HepG2 (cell line): ENCODE measurements at regions of chr7 and their contacts with region 1.

Region 1: DNA sequence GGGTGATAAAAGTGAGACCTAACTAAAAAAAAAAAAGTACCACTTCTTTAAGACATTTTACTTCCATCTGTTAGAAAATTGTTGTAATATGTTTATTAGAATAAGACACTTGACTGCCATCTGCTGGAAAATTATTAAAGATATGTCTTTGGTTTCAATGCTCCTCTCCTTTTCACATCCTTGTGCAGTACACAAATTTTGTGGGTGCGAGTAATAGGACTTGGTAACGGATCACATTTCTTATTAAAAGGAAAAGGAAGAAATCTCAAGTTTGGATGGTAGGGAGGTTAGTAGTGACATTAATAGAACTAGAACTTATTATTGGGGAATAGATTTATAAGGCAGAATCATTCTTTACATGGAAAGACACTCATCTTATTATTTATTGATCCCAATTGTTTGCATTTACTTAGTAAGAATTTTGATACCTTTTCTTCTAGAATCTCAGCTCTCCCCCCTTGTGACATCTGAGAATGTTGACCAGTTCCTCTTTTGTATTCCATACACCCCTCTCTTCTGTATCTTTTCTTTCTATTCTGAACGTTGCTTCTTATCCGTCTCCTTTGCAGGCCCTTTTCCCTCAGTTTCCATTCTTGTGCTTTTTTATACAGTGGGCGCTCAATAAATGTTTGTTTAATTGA is 43.1 kb upstream of the RPA3 start:
- DNase-seq: peak; percentile 48
- ATAC-seq: no peak; the same call in 2 of the 3 replicates
- H3K4me3 ChIP-seq: no peak overlapping the region
- H3K27ac ChIP-seq: no peak overlapping the region
- H3K4me1 ChIP-seq: peaks cover 11% of the 10 kb centered on the region
- H3K27me3 ChIP-seq: no peaks in the 10 kb centered on the region
- CTCF ChIP-seq: peak; percentile 24; the same call in 1 of the 2 replicates
- EP300 ChIP-seq: no peak
- POLR2A ChIP-seq: no peak
- RAD21 ChIP-seq: no peak

Region 2: GRCh38 chr7:7424151-7424873 is 337.1 kb before region 1 on chr7:
- CTCF ChIA-PET with region 1: no interaction called
- POLR2A ChIA-PET with region 1: no interaction called
- in situ Hi-C with region 1: no loop called
- intact Hi-C with region 1: loop called (anchors 10 kb)
- DNase-seq: peak; percentile 58
- ATAC-seq: peak; percentile 95
- H3K4me3 ChIP-seq: peak overlapping the region in 2 of 3 experiments; percentile 5 to 25; a peak in 2 of 6 replicates
- H3K27ac ChIP-seq: no peak overlapping the region
- H3K4me1 ChIP-seq: no peaks in the 10 kb centered on the region
- H3K27me3 ChIP-seq: no peaks in the 10 kb centered on the region
- CTCF ChIP-seq: peak; percentile 89
- EP300 ChIP-seq: no peak
- POLR2A ChIP-seq: no peak
- RAD21 ChIP-seq: peak; percentile 91

Region 3: DNA sequence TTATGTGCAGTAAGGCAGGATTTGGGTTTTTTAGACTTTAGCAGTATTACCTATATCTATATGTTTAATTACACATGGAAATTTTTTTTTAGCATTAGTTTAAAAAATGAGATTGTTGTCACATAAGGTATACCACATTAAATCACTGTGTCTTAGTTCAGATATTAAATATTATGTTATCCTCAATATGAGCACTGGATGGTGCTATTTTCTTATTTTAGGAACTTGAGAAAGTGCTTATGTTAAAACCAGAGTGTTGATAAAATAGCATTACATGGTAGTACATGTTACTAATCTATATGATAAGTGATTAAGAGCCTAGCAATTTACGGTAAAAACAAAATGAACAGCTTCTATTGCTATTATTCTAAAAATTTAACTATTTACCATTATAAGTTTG is 166.0 kb before region 1 on chr7:
- CTCF ChIA-PET with region 1: no interaction called
- POLR2A ChIA-PET with region 1: no interaction called
- in situ Hi-C with region 1: no loop called
- intact Hi-C with region 1: loop called (anchors 5 kb)
- DNase-seq: peak; percentile 3
- ATAC-seq: no peak
- H3K4me3 ChIP-seq: no peak overlapping the region
- H3K27ac ChIP-seq: no peak overlapping the region
- H3K4me1 ChIP-seq: peaks cover 8% of the 10 kb centered on the region
- H3K27me3 ChIP-seq: no peaks in the 10 kb centered on the region
- CTCF ChIP-seq: peak; percentile 26; the same call in 1 of the 2 replicates
- EP300 ChIP-seq: no peak
- POLR2A ChIP-seq: no peak
- RAD21 ChIP-seq: no peak

Region 4: GRCh38 chr7:7640221-7641128 is 121.0 kb before region 1 on chr7 and contains the start of gene UMAD1:
- CTCF ChIA-PET with region 1: no interaction called
- POLR2A ChIA-PET with region 1: no interaction called
- in situ Hi-C with region 1: no loop called
- intact Hi-C with region 1: loop called (anchors 5 kb)
- DNase-seq: peak; percentile 99
- ATAC-seq: peak; percentile 98
- H3K4me3 ChIP-seq: peak within 1 kb of the TSS; percentile 88 to 95 (median 94)
- H3K27ac ChIP-seq: peak within 1 kb of the TSS; percentile 82
- H3K4me1 ChIP-seq: peaks cover 35% of the 10 kb centered on the region
- H3K27me3 ChIP-seq: no peaks in the 10 kb centered on the region; a peak in 1 of 5 replicates
- CTCF ChIP-seq: peak; percentile 24
- EP300 ChIP-seq: 0 out of 4 replicates have a peak, but pooled peaks of 1 of the 2 experiments have one; percentile 7
- POLR2A ChIP-seq: peak; percentile 71 to 76
- RAD21 ChIP-seq: no peak
- total RNA-seq, gene UMAD1: 17.6 and 26.4 TPM in 2 replicates

Region 5: GRCh38 chr7:7681179-7681935 is 80.1 kb before region 1 on chr7:
- CTCF ChIA-PET with region 1: interaction called, 15 read pairs
- POLR2A ChIA-PET with region 1: no interaction called
- in situ Hi-C with region 1: loop called (anchors 5 kb)
- intact Hi-C with region 1: loop called (anchors 1 kb)
- DNase-seq: peak; percentile 50
- ATAC-seq: peak; percentile 66
- H3K4me3 ChIP-seq: no peak overlapping the region
- H3K27ac ChIP-seq: no peak overlapping the region
- H3K4me1 ChIP-seq: no peaks in the 10 kb centered on the region
- H3K27me3 ChIP-seq: no peaks in the 10 kb centered on the region
- CTCF ChIP-seq: peak; percentile 64
- EP300 ChIP-seq: no peak
- POLR2A ChIP-seq: no peak
- RAD21 ChIP-seq: 0 out of 2 replicates have a peak, but pooled peaks have one; percentile 35

Region 6: GRCh38 chr7:8035647-8036518 is 274.4 kb after region 1 on chr7:
- CTCF ChIA-PET with region 1: no interaction called
- POLR2A ChIA-PET with region 1: no interaction called
- in situ Hi-C with region 1: no loop called
- intact Hi-C with region 1: loop called (anchors 10 kb)
- DNase-seq: peak; percentile 44
- ATAC-seq: peak; percentile 99
- H3K4me3 ChIP-seq: no peak overlapping the region
- H3K27ac ChIP-seq: no peak overlapping the region
- H3K4me1 ChIP-seq: no peaks in the 10 kb centered on the region
- H3K27me3 ChIP-seq: no peaks in the 10 kb centered on the region
- CTCF ChIP-seq: peak; percentile 78
- EP300 ChIP-seq: no peak
- POLR2A ChIP-seq: no peak
- RAD21 ChIP-seq: 0 out of 2 replicates have a peak, but pooled peaks have one; percentile 25

Region 7: DNA sequence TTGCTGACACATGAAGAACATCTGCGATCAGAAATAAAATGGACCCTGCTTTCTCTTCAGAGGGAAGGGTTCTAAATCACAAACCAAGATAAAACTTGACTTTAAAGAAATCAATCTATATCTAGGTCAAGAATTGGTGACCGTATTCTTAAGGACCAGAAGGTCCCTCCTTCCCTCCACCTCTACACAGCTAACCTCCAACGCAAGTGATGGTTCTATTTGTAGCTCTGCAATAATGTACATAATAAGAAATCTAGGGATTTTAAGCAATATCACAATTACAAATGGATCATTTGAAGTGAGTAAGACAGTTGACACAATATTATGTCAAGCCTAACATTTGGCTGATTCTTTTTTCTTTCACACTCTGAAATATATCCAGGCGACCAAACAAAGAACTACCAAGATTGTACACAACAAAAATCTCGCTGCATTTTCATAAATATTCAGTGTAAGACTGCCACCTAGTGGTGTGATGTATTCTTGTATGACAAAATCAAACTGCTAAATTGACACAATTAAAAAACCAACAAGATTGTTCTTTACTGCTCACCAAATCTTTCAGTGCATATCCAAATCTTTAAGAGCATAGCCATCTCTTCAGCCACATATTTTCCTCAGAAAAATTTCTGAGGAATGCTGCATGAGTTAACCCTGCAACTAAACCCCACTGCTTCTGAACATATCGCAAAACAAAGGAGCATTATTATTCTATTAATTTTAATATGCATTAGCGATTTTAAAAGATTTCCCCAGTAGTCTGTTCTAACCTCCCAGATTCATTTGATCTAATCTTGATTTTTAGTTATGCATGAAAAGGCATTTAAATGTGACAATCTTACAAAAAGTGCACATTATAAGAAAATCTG is 456.0 kb after region 1 on chr7:
- CTCF ChIA-PET with region 1: no interaction called
- POLR2A ChIA-PET with region 1: no interaction called
- in situ Hi-C with region 1: no loop called
- intact Hi-C with region 1: loop called (anchors 10 kb)
- DNase-seq: peak; percentile 51
- ATAC-seq: peak; percentile 34; the same call in 1 of the 3 replicates
- H3K4me3 ChIP-seq: no peak overlapping the region
- H3K27ac ChIP-seq: no peak overlapping the region
- H3K4me1 ChIP-seq: no peaks in the 10 kb centered on the region
- H3K27me3 ChIP-seq: no peaks in the 10 kb centered on the region
- CTCF ChIP-seq: peak; percentile 69
- EP300 ChIP-seq: no peak
- POLR2A ChIP-seq: no peak
- RAD21 ChIP-seq: no peak